Activated naive CD4-positive, alpha-beta T cell treated with anti-CD3 and anti-CD28 coated beads, Interleukin-2, amount 10 ng/mL, durations not matched to agents 7 days and 5 days (primary cell): ENCODE measurements at regions of chr14 and their contacts with region 1.

Region 1: DNA sequence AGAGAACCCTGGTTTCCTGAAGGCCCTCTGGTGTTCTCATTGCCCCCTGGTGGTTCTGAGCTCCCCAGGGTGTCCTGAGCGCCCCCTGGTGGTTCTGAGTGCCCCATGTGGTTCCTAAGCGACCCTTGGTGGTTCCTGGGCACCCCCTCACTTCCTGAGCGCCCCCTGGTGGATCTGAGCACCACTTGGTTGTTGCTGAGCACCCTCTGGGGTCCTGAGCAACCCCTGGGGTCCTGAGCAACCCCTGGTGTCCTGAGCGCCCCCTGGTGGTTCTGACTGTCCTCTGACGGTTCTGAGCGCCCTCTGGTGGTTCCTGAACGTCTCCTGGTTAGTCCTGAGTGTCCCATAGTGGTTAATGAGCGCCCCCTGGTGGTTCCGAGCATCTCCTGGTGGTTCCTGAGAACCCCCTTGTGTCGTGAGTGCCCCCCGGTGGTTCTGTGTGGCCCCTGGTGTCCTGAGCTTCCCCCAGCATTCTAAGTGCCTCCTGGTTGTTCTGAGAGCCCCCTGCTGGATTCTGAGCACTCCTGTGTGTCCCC is 568.3 kb downstream of the TMEM121 start:
- DNase-seq: peak; percentile 79
- H3K4me3 Mint-ChIP-seq: no peak overlapping the region
- H3K27ac Mint-ChIP-seq: no peak overlapping the region
- H3K4me1 Mint-ChIP-seq: no peaks in the 10 kb centered on the region
- H3K27me3 Mint-ChIP-seq: peaks cover 25% of the 10 kb centered on the region

Region 2: DNA sequence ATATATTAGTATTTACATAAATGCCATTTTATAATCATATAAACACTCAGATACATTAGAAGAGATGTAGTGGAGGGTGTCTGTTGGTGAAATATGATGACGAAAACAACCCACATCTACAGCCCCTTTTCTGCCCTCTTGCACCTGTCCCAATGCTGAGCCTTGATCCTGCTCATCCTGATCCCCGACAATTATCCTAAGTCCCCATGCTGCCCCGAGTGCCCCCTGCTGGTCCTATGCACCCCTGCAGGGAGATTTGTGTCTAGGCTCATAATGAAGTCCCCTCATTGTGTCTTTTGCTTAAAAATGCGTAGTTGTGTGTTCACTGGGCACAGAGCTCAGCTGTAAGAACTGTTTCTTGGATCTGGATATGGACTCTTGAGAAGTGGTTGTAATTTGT is 13.8 kb before region 1 on chr14:
- CTCF ChIA-PET with region 1: interaction called, 23 read pairs
- DNase-seq: no peak
- H3K4me3 Mint-ChIP-seq: no peak overlapping the region
- H3K27ac Mint-ChIP-seq: no peak overlapping the region
- H3K4me1 Mint-ChIP-seq: peaks cover 1% of the 10 kb centered on the region
- H3K27me3 Mint-ChIP-seq: peaks cover 20% of the 10 kb centered on the region

Region 3: DNA sequence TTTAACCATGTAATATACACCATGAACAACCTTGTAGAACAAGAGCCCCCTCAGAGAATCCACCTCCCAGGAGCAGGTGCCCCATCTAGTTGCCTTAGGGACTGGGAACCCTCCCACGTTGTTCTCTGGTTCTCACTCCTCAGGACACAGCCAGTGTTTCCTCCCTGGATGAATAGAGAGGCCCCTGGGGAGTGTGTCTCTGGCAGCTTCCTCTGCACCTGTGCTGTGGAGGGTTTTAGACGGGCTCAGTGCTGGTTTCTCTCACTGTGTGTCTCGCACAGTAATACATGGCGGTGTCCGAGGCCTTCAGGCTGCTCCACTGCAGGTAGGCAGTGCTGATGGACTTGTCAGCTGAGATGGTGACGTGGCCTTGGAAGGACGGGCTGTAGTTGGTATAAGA is 13.0 kb after region 1 on chr14:
- CTCF ChIA-PET with region 1: interaction called, 12 read pairs
- DNase-seq: no peak
- H3K4me3 Mint-ChIP-seq: no peak overlapping the region
- H3K27ac Mint-ChIP-seq: no peak overlapping the region
- H3K4me1 Mint-ChIP-seq: no peaks in the 10 kb centered on the region
- H3K27me3 Mint-ChIP-seq: peaks cover 31% of the 10 kb centered on the region